ENCODE measurements at regions of chr7 and their contacts with region 1.

Region 1: GRCh38 chr7:1412322-1413261 is 46.7 kb downstream of the MICALL2 start:
- DNase-seq: peak; percentile 99
- CTCF ChIP-seq: peak; percentile 79

Region 2: DNA sequence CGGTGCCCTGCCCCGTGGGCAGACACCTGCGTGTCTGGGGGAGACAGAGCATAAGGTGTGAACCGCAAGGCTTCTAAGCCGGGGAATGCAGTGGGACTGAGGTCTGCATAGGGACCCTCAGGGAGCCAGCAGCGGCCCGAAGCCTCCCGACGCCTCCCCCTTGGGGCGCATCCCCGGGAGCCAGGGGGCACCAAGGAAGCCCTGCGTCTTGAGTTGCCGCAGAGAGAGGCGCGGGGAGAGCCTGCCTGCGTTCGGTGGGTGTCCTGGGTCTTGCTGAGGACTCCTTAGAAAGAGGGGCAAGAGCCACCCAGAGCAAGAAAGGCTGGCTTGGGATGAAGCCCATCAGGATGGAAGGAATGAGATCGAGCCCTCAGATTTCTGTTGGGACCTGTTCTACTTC is 198.1 kb before region 1 on chr7:
- in situ Hi-C with region 1: no loop called
- DNase-seq: no peak
- CTCF ChIP-seq: no peak

Region 3: DNA sequence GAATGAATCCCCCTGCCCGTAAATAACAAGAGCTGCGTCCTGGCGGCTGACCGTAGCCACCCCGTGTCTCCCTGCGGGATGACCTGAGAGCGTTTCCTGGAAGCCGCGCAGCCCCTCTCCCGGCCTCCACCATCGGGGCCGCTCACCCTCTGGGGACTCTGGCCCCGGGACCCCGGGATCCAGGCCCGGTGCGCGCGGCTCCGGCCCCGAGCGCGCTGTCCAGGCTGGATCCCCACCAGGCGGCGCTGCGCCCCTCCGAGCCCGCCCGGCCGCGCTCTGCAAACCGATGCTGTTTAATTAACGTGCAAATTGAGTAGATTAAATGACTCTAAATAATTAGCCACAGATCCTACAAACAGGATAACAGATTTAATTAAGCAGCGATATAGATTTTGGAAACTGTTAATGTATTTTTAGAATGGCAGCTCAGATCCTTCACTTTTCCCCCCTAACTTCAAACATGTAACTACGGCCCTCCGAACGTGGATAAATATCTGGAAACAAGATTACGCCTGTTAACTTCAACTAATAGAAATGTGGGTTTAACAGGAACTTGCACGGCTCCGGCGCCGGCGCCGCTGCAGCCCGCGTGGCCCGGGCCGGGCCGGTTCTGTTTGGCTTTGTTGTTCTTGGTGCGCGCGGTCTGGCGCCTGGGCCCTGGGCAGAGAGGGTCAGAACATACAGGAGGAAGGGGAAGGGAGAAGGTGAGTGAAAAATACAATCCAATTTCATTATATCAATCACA is 187.0 kb before region 1 on chr7:
- in situ Hi-C with region 1: loop called (anchors 25 kb)
- DNase-seq: peak; percentile 87
- CTCF ChIP-seq: peak; percentile 79

Region 4: DNA sequence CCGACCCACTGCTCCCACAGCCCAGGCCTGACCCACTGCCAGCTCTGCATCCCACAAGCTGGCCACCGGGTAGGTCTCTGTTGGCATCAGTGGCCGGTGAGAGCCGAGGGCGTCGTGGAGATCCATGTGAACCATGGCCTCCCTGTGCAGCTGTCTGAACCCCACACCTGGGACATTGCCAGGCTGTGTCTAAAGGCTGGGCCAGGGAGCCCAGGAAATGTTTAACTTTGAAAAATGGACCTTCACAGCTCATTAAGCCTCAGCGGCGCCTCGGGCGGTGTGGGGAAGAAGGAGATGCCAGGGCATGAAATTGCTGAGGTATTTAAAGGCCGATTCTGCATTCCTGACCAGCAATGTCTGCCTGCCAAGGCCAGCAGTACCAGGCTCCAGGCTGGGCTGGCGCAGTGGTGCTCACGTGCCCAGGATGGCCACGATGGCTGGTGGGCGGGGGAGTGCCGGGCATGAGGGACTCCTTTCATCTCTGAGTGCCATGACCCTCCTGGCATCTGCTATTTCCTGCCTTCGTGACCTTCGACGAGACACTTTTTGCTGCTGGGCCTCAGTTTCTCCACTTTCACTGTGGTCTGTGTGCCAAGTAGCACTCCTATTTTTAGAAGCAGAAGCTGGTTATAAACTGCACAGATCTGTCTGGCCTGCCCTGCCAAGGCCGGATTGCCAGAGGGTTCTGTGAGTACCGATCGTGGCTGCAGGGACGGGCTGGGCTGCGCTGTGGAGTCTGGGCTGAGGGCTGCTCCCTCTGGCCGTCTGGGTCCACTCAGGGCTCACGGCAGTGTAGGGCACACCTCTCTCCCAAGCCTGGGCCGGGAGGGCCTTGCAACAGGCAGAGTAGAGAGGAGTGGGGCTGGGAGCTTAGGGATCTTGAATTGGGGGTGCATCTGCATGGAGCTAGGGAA is 279.3 kb after region 1 on chr7:
- in situ Hi-C with region 1: no loop called
- DNase-seq: no peak
- CTCF ChIP-seq: no peak

Measured in GM13977 (cell line).